Panc1 (cell line): ENCODE measurements at regions of chr11 and their contacts with region 1.

Region 1: DNA sequence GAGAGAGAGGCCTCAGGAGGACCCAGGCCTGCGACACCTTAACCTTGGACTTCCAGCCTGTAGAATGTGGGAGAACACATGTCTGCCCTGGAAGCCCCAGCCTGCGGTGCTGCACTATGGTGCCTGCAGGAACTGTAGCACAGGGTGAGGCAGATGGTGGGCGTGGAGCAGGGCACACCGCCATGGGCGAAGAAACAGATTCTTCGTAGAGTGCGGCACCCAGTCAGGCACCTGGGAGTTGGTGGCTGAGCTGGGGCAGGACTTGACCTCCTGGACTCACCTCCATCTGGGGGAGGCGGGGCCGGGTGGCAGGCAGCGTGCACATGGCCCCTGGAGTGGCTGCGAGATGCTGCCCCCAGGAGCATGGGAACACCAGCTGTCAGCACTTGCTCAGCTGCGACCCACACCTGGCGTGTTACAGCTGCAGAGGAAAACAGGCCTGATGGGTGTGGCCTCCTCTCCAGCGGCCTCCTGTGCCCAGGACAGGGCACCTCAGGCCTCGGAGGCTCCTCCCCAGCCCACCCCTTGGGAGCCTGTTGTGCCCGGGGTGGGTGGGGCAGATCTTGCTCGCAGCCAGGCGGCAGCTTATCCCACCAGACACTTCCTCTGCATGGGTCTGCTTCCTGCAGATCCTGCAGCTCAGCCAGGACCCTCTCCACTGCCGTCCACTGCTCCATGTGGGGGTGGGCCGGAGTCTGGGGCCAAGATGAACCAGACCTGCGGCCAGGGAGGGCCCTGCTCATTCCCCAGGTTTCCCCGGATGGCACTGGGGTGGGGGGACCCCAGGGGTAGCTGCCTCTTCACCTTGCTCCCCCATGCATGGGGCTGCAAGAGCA is 80.4 kb downstream of the MYEOV start:
- DNase-seq: no peak
- ATAC-seq: no peak
- H3K4me3 ChIP-seq: no peak overlapping the region
- H3K27ac ChIP-seq: peak overlapping the region; percentile 65; the same call in 1 of the 2 replicates
- H3K4me1 ChIP-seq: peaks cover 40% of the 10 kb centered on the region
- H3K27me3 ChIP-seq: no peaks in the 10 kb centered on the region
- CTCF ChIP-seq: no peak

Region 2: DNA sequence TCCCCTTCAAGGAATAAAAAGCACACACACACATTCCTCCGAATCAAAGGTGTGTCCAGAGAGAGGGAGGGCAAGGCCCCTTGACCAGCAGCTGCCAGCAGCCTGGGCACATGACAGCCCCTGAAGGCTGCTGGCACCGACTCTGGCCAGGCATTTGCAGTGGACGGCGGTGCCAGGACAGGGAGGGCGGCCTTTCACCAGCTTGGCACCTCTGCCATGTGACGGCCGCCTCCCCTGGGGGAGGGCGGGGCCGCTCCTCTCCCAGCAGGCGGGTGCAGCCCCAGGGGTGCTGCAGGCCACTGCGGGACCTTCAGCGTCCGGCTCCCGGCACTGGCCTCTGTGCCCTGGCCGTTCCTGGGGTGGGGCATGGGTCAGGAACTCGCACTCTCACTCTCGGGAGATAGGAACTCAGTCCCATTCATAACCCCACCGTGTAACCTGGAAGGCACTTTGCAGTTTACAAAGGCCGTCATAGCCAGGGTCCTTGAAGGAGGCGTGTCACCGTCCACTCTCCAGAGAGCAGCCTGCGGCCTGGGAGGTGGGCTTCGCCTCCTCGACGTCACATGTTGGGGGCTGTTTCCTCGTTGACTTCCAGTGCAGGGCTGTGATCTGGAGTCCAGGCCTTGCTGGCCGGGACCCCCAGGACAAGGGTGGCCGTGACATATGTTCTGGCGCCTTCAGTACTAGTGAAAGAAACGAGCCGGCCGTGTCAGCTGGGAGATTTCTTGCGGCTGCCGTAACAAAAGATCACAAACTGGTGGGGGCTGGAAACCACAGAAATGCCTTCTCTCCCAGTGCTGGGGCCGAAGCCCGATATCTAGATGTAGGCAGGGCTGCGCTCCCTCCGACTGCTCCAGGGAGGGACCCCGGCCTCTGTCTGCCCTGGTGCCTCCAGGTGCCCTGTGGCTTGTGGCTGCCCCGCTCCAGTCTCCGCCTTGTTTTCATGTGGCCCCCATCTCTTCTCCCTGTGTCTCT is 258.5 kb before region 1 on chr11:
- CTCF ChIA-PET with region 1: no interaction called
- POLR2A ChIA-PET with region 1: no interaction called
- in situ Hi-C with region 1: no loop called
- intact Hi-C with region 1: loop called (anchors 10 kb)
- DNase-seq: no peak
- ATAC-seq: peak; percentile 44
- H3K4me3 ChIP-seq: no peak overlapping the region
- H3K27ac ChIP-seq: peak overlapping the region; percentile 75
- H3K4me1 ChIP-seq: peaks cover 26% of the 10 kb centered on the region
- H3K27me3 ChIP-seq: no peaks in the 10 kb centered on the region
- CTCF ChIP-seq: no peak